Activated naive CD4-positive, alpha-beta T cell treated with anti-CD3 and anti-CD28 coated beads, Interleukin-2, amount 10 ng/mL, durations not matched to agents 7 days and 5 days (primary cell): ENCODE measurements at regions of chr2 and their contacts with region 1.

Region 1: GRCh38 chr2:121076885-121077549 is 208.0 kb downstream of the TFCP2L1 start:
- DNase-seq: peak; percentile 78
- H3K4me3 Mint-ChIP-seq: no peak overlapping the region
- H3K27ac Mint-ChIP-seq: no peak overlapping the region
- H3K4me1 Mint-ChIP-seq: no peaks in the 10 kb centered on the region
- H3K27me3 Mint-ChIP-seq: peaks cover 4% of the 10 kb centered on the region

Region 2: GRCh38 chr2:120693121-120693520 is 383.9 kb before region 1 on chr2:
- CTCF ChIA-PET with region 1: interaction called, 16 read pairs
- DNase-seq: no peak
- H3K4me3 Mint-ChIP-seq: no peak overlapping the region
- H3K27ac Mint-ChIP-seq: no peak overlapping the region
- H3K4me1 Mint-ChIP-seq: peaks cover 5% of the 10 kb centered on the region
- H3K27me3 Mint-ChIP-seq: peaks cover 53% of the 10 kb centered on the region

Region 3: DNA sequence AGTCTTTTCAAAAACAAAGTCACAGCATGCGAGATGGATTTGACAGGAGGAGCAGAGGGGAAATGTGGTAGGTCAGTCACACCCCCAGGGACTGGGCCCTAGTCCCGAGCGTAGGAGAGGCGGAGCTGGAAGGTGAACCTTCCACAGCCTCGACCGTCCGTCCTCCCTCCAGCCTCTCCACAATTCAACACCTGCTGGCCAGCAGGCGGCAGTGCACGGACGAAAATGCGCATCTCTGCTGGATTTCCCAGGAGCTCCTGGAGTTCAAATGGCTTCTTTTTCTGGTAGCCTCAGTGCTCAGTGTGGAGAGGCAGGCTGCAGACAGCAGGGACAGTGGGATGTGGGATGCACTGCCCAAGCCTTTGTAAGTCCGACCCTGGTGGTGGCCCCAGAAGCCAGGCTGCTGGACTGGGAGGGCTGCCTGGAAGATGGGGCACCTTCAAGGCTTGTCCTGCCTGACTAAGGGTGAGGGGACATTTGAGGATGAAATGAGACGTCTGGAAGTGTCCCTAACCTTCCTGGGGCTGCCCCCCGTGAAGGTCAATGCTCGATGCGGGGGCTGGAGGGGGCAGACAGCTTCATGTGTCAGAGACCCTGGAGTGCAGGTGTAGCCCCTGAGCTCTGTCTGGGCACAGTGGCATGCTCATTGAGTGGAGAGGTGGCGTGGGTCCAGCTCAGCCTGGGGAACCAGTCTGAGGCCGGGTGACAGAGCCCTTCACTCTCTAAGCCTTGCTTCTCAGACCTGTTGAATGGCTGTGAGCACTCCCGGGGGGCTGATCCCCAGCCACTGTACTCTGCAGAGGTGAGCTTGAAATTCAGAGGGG is 18.5 kb after region 1 on chr2:
- CTCF ChIA-PET with region 1: interaction called, 13 read pairs
- DNase-seq: peak; percentile 39
- H3K4me3 Mint-ChIP-seq: no peak overlapping the region
- H3K27ac Mint-ChIP-seq: no peak overlapping the region
- H3K4me1 Mint-ChIP-seq: no peaks in the 10 kb centered on the region
- H3K27me3 Mint-ChIP-seq: peaks cover 22% of the 10 kb centered on the region